Left colon (tissue), 2 donors: ENCODE measurements at regions of chr7 and their contacts with region 1.

Region 1: GRCh38 chr7:35424869-35425495 is 171.1 kb upstream of the TBX20 start:
- DNase-seq: peak in 1 of 2 donors; percentile 63
- ATAC-seq: peak; percentile 75

Region 2: DNA sequence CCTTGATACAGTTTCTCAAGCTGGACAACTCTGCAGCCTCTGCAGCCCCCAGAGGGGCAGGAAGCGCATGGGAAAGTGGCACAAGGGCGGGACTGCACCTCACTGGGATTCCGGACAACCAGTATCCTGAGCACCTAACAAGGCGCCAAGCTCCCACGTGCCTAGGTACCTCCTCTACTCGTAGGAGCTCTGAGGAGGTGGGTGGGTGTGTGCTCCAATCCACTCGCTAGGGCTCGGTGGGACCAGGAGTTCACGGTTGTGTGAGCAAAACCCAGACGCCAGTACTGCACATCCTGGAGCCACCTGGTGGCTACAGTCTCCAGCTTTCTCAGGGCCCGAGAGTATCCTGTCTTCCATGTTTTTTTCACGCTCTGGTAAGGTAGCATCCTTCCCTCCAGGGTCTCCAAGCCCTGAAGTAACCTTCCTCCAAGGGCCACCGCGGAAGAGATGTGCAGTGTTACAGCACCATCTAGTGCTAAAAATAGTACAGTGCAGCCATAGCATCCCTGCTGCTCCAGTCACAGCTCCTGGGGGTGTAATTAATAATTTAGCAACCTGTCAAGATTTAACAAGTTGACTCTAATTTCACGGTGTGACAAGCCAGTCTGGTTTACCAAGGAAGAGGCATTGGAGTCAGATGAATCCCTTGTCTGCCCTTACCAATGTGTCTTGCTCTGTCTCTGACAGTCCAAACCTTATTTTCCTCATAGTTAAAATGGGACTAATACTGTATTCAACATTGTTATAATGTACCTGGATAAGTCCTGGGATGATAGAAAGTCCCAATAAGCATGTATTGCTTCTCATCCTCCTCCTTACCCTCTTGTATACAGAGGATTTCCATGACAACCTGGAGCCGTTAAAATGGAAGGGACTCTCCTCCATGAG is 199.6 kb after region 1 on chr7:
- intact Hi-C with region 1: loop called in 1 of 2 experiments (anchors 10 kb)
- DNase-seq: peak in 1 of 2 donors; percentile 11
- ATAC-seq: peak; percentile 78

Region 3: GRCh38 chr7:35716038-35716803 is 291.2 kb after region 1 on chr7:
- intact Hi-C with region 1: no loop called
- DNase-seq: no peak
- ATAC-seq: peak; percentile 40